ENCODE measurements at regions of chr5 and their contacts with region 1.

Region 1: GRCh38 chr5:140664359-140665119 is at the start of gene WDR55:
- H3K4me3 Mint-ChIP-seq: peak within 1 kb of the TSS; percentile 89
- H3K27ac Mint-ChIP-seq: peak within 1 kb of the TSS; percentile 98
- H3K4me1 Mint-ChIP-seq: peaks cover 48% of the 10 kb centered on the region
- H3K27me3 Mint-ChIP-seq: no peaks in the 10 kb centered on the region

Region 2: GRCh38 chr5:140401362-140402257 is 262.9 kb before region 1 on chr5 and contains the start of gene ANKHD1:
- intact Hi-C with region 1: loop called (anchors 10 kb)
- H3K4me3 Mint-ChIP-seq: no peak within 1 kb of the TSS
- H3K27ac Mint-ChIP-seq: no peak within 1 kb of the TSS
- H3K4me1 Mint-ChIP-seq: peaks cover 36% of the 10 kb centered on the region
- H3K27me3 Mint-ChIP-seq: no peaks in the 10 kb centered on the region

Region 3: GRCh38 chr5:140639148-140639979 is 25.2 kb before region 1 on chr5 and contains the start of gene TMCO6:
- intact Hi-C with region 1: loop called (anchors 2 kb)
- H3K4me3 Mint-ChIP-seq: peak within 1 kb of the TSS; percentile 82
- H3K27ac Mint-ChIP-seq: peak within 1 kb of the TSS; percentile 83
- H3K4me1 Mint-ChIP-seq: peaks cover 56% of the 10 kb centered on the region
- H3K27me3 Mint-ChIP-seq: no peaks in the 10 kb centered on the region

Region 4: DNA sequence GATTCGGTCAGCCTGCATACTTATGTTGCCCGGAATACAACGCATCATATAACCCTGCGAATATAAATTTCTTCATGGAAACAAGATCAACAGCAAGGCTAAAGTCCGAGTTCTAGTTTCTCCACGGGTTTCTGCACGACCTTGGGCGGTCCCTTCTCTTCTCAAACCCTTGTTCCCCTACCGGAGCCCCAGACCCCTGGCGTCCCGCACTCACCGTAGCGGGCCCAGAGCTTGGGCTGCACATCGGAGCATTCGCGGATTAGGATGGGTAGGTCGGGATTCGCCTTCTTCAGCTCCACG is 17.5 kb before region 1 on chr5:
- intact Hi-C with region 1: loop called (anchors 1 kb)
- H3K4me3 Mint-ChIP-seq: peak overlapping the region; percentile 95
- H3K27ac Mint-ChIP-seq: peak overlapping the region; percentile 97
- H3K4me1 Mint-ChIP-seq: peaks cover 29% of the 10 kb centered on the region
- H3K27me3 Mint-ChIP-seq: no peaks in the 10 kb centered on the region

Region 5: DNA sequence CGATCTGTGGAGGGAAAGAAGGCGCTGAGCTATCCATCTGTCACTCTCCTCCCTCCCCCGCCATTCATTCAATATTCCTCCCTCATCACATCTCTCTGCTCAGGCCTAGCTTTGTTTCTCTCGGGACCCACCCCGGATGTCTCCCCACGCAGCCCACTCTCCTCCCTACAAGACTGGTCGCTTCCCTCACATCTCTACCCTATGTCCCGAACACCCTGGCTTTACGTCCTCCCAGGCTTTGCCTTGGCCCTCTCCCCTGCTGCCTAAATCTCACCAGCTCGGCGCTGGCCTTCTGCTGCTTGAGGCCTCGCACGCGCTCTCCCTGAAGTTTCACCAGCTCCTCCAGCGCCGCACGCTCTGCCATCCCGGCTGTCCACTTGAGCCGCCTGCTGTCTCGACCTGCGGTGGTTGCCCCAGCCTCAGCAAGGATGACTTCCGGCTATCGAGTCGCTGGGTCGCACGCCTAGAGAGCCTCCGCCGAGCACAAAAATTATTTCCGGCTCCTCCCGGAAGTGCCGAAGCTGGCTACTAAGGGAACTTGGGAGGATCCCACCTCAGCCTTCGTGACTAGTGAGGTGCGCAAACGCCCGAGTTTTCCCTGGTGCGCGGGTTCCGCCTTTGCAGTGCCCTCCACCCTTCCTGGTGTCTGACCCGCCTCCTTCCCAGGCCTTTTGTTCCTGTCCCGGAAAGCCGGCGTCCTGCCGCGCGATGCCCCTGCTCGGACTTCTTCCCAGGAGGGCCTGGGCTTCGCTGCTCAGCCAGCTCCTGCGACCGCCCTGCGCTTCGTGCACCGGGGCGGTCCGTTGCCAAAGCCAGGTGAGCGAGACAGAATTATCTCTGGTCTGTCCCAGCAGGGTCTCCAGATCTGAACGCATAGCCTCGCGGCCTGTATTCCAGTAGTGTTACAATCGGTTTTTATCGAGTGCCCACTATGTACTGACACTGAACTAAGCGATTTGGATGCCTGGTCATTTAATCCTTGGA is 26.7 kb after region 1 on chr5 and contains the starts of genes HARS1 and HARS2:
- intact Hi-C with region 1: loop called (anchors 1 kb)
- H3K4me3 Mint-ChIP-seq: peak within 1 kb of the TSS; percentile 98
- H3K27ac Mint-ChIP-seq: peak within 1 kb of the TSS; percentile 92
- H3K4me1 Mint-ChIP-seq: peaks cover 26% of the 10 kb centered on the region
- H3K27me3 Mint-ChIP-seq: no peaks in the 10 kb centered on the region

Region 6: GRCh38 chr5:140710899-140711552 is 46.5 kb after region 1 on chr5:
- intact Hi-C with region 1: loop called (anchors 2 kb)
- H3K4me3 Mint-ChIP-seq: peak overlapping the region; percentile 87
- H3K27ac Mint-ChIP-seq: peak overlapping the region; percentile 95
- H3K4me1 Mint-ChIP-seq: peaks cover 33% of the 10 kb centered on the region
- H3K27me3 Mint-ChIP-seq: no peaks in the 10 kb centered on the region

Region 7: GRCh38 chr5:140808889-140809291 is 144.4 kb after region 1 on chr5:
- intact Hi-C with region 1: no loop called
- H3K4me3 Mint-ChIP-seq: no peak overlapping the region
- H3K27ac Mint-ChIP-seq: no peak overlapping the region
- H3K4me1 Mint-ChIP-seq: no peaks in the 10 kb centered on the region
- H3K27me3 Mint-ChIP-seq: peaks cover 11% of the 10 kb centered on the region

Region 8: GRCh38 chr5:140821375-140822280 is 157.1 kb after region 1 on chr5 and contains the start of gene PCDHA5:
- intact Hi-C with region 1: no loop called
- H3K4me3 Mint-ChIP-seq: no peak within 1 kb of the TSS
- H3K27ac Mint-ChIP-seq: no peak within 1 kb of the TSS
- H3K4me1 Mint-ChIP-seq: no peaks in the 10 kb centered on the region
- H3K27me3 Mint-ChIP-seq: peaks cover 9% of the 10 kb centered on the region

Region 9: DNA sequence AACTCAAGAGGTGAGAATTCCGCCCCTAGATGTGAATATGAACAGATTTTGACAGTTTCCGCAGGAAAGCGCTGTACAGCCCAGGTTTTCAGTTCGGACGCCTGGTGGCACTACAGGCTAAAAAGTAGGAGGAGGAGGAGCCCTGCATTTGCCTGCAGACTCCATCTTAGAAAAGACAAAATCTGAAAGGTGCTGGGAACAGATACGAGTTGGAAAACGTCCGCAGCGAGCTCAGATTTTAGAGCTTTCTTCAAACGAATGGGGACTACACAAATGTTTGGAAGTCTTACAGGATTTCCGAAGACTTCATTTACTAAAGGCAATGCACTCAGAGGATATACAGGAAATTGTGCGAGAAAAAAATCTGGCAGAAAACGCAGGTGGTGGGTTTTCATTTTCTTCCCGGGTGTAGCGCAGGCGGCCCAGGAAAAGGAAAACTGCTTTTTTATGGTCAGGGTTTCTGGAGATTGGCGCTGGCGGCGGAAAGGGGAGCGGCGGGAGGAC is 420.0 kb after region 1 on chr5:
- intact Hi-C with region 1: no loop called
- H3K4me3 Mint-ChIP-seq: no peak overlapping the region
- H3K27ac Mint-ChIP-seq: no peak overlapping the region
- H3K4me1 Mint-ChIP-seq: no peaks in the 10 kb centered on the region
- H3K27me3 Mint-ChIP-seq: peaks cover 10% of the 10 kb centered on the region

Measured in dendritic cell treated with granulocyte-macrophage colony-stimulating factor and Interleukin-4, amounts not matched to agents 40 ng/mL and 50 ng/mL, for 4 days (primary cell).